ENCODE measurements at regions of chr1 and their contacts with region 1.

Region 1: DNA sequence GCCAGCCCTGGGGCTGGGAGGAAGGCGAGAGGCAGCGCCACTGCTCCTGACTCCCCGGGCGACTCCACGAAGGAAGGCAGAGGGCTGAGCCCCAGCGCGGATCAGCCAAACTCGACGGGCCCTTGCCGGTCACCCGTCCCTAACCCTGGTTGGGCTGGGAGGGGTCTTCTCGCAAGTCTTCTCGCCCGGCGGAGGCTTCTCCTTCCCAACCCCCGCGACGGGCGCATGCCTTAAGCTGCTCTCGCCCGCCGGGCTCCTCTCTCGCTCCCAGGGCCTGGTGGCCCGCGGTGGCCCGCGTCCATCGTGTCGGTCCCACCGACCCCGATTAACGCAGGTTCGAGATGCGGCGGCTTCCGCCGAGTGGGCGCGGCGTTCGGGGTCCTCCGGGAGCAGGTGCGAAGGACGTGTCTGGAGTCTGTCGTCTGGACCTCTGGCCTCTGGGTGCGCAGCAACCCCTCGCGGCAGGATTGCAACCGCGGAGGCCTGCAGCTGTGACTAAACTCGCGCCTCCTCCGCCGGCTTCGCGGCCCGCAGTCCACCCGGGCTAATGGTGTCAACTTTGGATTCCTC is 29.0 kb upstream of the PPM1J start:
- DNase-seq: no peak
- H3K4me3 ChIP-seq: peak overlapping the region; percentile 37
- CTCF ChIP-seq: peak; percentile 77

Region 2: DNA sequence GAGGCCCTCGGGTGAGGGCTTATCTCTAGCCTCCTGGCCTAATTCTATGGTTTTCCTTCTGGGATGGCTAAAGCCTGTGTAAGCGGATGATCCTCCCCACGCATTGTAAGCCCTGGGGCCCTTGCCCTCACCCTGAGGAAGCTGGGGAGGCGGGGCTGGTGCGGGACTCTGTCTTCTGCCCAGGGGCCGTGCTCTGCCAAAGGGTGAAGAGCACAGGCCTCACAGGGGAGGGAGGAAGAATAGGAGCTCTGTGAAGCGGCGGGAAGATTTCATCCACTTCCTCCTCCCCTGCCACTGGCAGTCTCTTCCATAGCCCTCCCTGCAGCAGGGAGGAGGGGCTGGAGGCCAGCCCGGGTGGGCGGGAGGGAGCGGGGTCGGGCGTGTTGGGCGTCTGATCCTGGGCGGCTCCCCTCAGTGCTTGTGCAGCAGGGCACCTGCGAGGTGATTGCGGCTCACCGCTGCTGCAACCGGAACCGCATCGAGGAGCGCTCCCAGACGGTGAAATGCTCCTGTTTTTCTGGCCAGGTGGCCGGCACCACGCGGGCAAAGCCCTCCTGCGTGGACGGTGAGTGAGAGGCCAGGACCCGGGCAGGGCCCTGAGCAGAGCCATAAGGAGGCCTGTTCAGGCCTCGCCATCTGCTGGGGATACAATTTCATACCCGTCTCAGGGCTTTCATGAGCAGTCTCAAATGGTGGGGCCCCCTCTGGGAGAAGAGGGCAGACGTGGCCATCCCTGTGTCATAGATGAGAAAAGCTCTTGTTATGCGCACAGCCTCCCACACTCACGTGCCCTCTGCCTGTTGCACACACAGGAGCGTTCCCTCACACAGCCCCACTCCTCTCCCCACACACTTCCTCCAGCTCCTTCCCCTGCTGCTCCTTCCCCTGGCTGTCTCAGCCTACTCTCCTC is 21.2 kb before region 1 on chr1:
- CTCF ChIA-PET with region 1: interaction called, 264 read pairs
- POLR2A ChIA-PET with region 1: no interaction called
- DNase-seq: no peak
- H3K4me3 ChIP-seq: peak overlapping the region; percentile 8; the same call in 1 of the 2 replicates
- CTCF ChIP-seq: no peak

Region 3: GRCh38 chr1:112754116-112754628 is 10.1 kb after region 1 on chr1:
- CTCF ChIA-PET with region 1: interaction called, 56 read pairs
- POLR2A ChIA-PET with region 1: no interaction called
- DNase-seq: no peak
- H3K4me3 ChIP-seq: no peak overlapping the region
- CTCF ChIP-seq: no peak

Region 4: GRCh38 chr1:112762541-112763517 is 18.7 kb after region 1 on chr1:
- CTCF ChIA-PET with region 1: interaction called, 56 read pairs
- POLR2A ChIA-PET with region 1: no interaction called
- DNase-seq: no peak
- H3K4me3 ChIP-seq: no peak overlapping the region
- CTCF ChIP-seq: no peak